Mucosa of descending colon (tissue), 3 donors: ENCODE measurements at regions of chr2 and their contacts with region 1.

Region 1: DNA sequence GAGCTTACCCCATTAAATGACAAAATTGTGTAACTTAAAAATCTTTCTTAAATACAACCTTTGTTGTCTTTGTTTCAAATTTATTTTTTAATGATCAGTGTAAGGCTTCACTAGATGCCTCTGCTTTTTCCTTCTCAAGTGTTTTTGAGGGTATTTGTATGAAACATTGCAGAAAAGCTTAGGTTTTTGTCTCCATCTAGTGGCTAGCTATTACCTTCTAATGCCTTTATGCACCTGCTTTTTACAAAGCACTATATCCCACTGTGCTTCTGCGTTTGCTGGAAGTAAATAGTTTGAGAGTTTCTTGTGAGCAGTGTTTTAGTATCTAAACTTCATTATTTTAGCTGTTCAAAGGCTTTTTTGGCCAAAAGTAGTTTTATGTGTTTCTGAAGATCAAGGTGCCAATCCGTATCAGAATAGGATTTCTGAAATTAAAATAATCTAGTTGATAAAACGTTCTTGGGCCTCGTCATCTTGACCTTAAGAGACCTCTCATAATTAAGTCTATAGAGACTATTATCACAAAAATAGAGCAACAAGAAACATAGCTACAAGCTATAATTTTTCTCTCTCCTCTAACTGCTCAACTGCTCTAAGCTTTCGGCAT is 47.0 kb downstream of the IWS1 start:
- DNase-seq: no peak
- ATAC-seq: peak; percentile 73
- H3K4me3 ChIP-seq: no peak overlapping the region
- H3K4me1 ChIP-seq: peaks cover 9% of the 10 kb centered on the region
- CTCF ChIP-seq: no peak

Region 2: DNA sequence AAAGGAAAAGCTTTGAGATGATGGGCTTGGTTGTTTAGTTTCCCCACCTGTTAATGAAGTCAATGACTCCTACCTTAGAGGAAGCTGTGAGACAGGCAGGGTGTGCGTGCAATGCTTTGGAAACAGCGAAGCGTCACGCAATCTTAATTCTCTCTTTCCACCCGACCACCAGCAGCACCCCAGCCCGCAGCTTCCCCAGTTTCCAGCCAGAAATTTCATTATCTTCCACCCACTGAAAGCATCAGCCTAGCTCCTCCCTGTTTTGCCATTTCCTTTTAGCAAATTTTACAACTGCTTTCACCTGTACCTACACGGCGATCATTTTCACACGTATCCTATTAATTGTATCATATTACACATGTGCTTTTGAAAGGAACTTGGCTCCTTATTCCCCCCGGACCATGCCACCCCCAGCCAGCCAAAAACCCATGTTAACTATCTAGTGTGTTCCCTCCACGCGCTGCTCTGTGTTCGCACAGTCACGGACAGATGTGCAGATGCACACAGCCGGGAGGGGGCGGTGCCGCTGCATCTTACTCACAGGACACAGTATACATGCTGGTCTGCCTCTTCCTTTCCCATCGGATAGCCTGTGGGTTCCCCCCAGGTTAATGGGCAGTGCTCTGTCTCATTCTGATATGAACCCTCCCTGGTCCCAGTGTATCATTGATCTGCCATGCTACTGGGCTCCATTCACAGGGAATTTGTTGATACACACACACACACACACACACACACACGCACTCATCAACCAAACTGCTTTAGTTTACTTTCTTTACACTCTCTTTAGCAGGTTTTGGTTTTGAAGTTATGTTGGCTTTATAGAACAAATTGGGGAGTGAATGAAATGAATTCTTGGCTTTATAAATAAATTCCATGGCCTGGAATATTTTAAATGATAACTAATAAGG is 281.6 kb before region 1 on chr2:
- intact Hi-C with region 1: loop called in 1 of 2 experiments (anchors 5 kb)
- DNase-seq: peak; percentile 79 to 91 (median 85)
- ATAC-seq: peak; percentile 96
- H3K4me3 ChIP-seq: no peak overlapping the region
- H3K4me1 ChIP-seq: peaks cover 3% of the 10 kb centered on the region
- CTCF ChIP-seq: peak; percentile 32

Region 3: DNA sequence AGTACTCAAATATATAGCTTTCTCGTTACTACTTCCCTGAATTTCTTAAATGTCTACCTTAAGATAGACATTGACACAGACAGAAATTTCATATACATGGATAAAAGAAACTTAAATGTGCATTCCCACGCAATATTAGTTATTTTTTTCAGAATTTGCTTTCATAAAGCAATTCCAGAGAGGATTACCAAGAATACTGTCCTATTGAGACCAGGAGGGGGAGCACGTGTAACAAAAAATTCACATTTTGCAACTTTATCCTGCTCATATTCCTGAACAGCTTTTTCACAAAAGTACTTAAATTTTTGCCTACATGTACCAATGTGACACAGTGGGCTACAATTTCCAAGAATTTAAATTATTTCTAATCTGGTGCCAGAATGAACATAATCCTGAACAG is 154.7 kb before region 1 on chr2:
- intact Hi-C with region 1: loop called in 1 of 2 experiments (anchors 10 kb)
- DNase-seq: peak in 1 of 3 donors; percentile 49
- ATAC-seq: no peak
- H3K4me3 ChIP-seq: no peak overlapping the region
- H3K4me1 ChIP-seq: no peaks in the 10 kb centered on the region
- CTCF ChIP-seq: no peak

Region 4: DNA sequence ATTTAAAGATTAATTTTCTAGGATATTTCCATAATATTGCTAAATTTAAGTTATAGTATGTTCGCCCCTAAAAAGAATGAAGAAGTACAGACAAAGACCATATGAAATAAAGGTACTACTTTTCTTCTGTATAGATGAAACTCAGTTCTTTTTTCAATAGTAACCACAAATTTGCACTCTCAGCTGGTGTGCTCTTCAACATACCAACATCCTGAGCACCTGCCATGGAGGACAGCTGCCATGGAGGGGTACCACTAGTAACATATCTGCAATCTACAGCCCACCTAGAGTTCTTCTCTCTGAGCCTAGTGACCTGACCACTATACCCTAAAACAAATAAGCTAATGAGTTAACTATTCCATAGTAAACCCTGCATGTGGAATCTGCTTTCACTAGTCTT is 148.6 kb before region 1 on chr2:
- intact Hi-C with region 1: loop called (anchors 10 kb)
- DNase-seq: no peak
- ATAC-seq: no peak
- H3K4me3 ChIP-seq: no peak overlapping the region
- H3K4me1 ChIP-seq: no peaks in the 10 kb centered on the region
- CTCF ChIP-seq: no peak